Natural killer cell (primary cell): ENCODE measurements at regions of chr7 and their contacts with region 1.

Region 1: GRCh38 chr7:106112117-106112971 is at the start of gene SYPL1:
- DNase-seq: peak; percentile 85 to 96
- ATAC-seq: peak; percentile 86 to 96 (median 89)
- H3K4me3 ChIP-seq: peak within 1 kb of the TSS; percentile 56
- H3K4me3 Mint-ChIP-seq: peak within 1 kb of the TSS; percentile 94
- H3K27ac ChIP-seq: peak within 1 kb of the TSS; percentile 88
- H3K27ac Mint-ChIP-seq: peak within 1 kb of the TSS; percentile 84
- H3K4me1 ChIP-seq: peaks cover 17% of the 10 kb centered on the region
- H3K4me1 Mint-ChIP-seq: peaks cover 30 to 38% of the 10 kb centered on the region in 2 donors
- H3K27me3 ChIP-seq: no peaks in the 10 kb centered on the region
- H3K27me3 Mint-ChIP-seq: peaks cover 2 to 13% of the 10 kb centered on the region in 2 donors
- CTCF ChIP-seq: no peak
- total RNA-seq, gene SYPL1: 13.1 to 22.2 (median 14.9) TPM

Region 2: DNA sequence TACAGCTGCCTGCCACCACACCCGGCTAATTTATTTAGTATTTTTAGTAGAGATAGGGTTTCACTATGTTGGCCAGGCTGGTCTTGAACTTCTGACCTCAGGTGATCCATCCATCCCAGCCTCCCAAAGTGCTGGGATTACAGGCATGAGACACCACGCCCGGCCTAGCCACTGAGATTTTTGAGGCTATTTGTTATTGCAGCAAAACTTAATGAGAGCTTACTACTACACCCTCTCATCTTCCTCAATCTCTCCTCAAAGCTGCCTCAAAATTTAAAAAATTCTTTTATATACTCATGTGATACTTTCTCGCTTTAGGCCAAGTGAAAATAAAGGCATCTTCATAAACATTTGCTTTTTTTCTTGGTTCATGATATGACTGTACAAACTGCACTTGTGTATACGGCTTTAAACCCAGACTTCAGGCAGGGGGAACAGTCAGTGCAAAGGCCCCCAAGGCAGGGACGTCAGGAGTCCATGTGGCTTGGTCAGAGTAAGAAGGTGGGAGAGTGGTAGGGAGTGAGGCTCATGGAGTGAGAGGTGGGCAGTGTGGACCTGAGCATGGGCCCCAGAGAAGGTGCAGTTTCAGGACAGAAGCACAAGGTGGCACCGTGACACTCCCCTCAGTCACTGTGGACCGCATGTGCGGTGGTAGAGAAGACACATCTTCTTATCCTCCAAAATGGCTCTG is 55.7 kb before region 1 on chr7:
- intact Hi-C with region 1: loop called (anchors 5 kb)
- DNase-seq: peak; percentile 54 to 87
- ATAC-seq: peak; percentile 92 to 99 (median 99)
- H3K4me3 ChIP-seq: no peak overlapping the region
- H3K4me3 Mint-ChIP-seq: no peak overlapping the region
- H3K27ac ChIP-seq: no peak overlapping the region
- H3K27ac Mint-ChIP-seq: no peak overlapping the region
- H3K4me1 ChIP-seq: peaks cover 27% of the 10 kb centered on the region
- H3K4me1 Mint-ChIP-seq: peaks cover 5 to 13% of the 10 kb centered on the region in 2 donors
- H3K27me3 ChIP-seq: no peaks in the 10 kb centered on the region
- H3K27me3 Mint-ChIP-seq: peaks cover 0 to 9% of the 10 kb centered on the region in 2 donors
- CTCF ChIP-seq: peak; percentile 81

Region 3: GRCh38 chr7:106071356-106071998 is 40.9 kb before region 1 on chr7:
- intact Hi-C with region 1: loop called (anchors 2 kb)
- DNase-seq: peak in 1 of 2 donors; percentile 77
- ATAC-seq: peak; percentile 96 to 99 (median 97)
- H3K4me3 ChIP-seq: peak overlapping the region; percentile 9
- H3K4me3 Mint-ChIP-seq: peak overlapping the region; percentile 73
- H3K27ac ChIP-seq: peak overlapping the region; percentile 88
- H3K27ac Mint-ChIP-seq: peak overlapping the region; percentile 83 to 86
- H3K4me1 ChIP-seq: peaks cover 59% of the 10 kb centered on the region
- H3K4me1 Mint-ChIP-seq: peaks cover 39 to 43% of the 10 kb centered on the region in 2 donors
- H3K27me3 ChIP-seq: no peaks in the 10 kb centered on the region
- H3K27me3 Mint-ChIP-seq: peaks cover 7 to 30% of the 10 kb centered on the region in 2 donors
- CTCF ChIP-seq: no peak

Region 4: DNA sequence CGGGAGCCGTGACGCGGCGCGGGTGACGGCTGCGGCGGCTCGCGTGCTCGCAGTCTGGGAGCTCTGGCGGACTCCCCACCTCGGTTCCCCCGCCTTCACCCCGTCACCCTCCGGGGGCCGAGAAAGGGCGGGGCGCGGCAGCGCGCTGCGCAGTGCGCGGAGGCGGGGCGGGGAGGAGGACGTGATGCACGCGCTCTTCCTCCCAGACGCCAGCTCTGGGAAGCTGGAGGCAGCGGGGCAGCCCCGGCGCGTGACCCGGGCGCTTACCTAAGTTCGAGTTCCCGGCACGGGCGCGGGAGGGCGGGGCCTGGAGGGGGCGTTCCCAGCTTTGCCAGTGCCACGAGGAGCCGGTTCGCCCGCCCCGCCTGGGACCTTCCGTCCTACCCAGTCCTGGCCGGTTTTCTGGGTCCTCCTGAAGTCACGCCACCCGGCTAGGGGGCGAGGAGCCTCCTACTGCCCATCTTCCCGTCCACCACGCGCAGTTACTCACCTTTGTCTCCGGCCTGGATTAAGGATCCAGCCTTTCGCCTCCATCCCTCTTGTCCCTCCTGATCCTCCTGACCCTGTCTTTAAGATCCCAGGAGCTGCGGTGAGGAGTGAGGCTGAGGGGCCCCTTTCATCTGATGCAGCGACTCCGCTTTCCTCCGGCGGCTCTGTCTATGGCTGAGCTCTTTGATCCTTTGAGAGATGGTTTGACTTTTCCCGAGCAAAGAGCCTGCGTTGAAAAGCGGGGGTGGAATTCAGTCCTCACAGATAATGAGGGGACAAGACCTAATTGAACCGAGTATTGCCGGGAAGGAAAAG is 172.9 kb after region 1 on chr7:
- intact Hi-C with region 1: loop called (anchors 10 kb)
- DNase-seq: peak; percentile 92 to 98
- ATAC-seq: peak; percentile 88 to 96 (median 89)
- H3K4me3 ChIP-seq: peak overlapping the region; percentile 97
- H3K4me3 Mint-ChIP-seq: peak overlapping the region; percentile 95
- H3K27ac ChIP-seq: peak overlapping the region; percentile 97
- H3K27ac Mint-ChIP-seq: peak overlapping the region; percentile 93 to 95
- H3K4me1 ChIP-seq: peaks cover 12% of the 10 kb centered on the region
- H3K4me1 Mint-ChIP-seq: peaks cover 16 to 20% of the 10 kb centered on the region in 2 donors
- H3K27me3 ChIP-seq: no peaks in the 10 kb centered on the region
- H3K27me3 Mint-ChIP-seq: peaks cover under 1 to 2% of the 10 kb centered on the region in 2 donors
- CTCF ChIP-seq: no peak

Region 5: GRCh38 chr7:106692450-106693051 is 580.2 kb after region 1 on chr7:
- intact Hi-C with region 1: no loop called
- DNase-seq: no peak
- ATAC-seq: no peak
- H3K4me3 ChIP-seq: no peak overlapping the region
- H3K4me3 Mint-ChIP-seq: no peak overlapping the region
- H3K27ac ChIP-seq: no peak overlapping the region
- H3K27ac Mint-ChIP-seq: no peak overlapping the region
- H3K4me1 ChIP-seq: no peaks in the 10 kb centered on the region
- H3K4me1 Mint-ChIP-seq: peaks cover 6 to 8% of the 10 kb centered on the region in 2 donors
- H3K27me3 ChIP-seq: no peaks in the 10 kb centered on the region
- H3K27me3 Mint-ChIP-seq: peaks cover 6 to 16% of the 10 kb centered on the region in 2 donors
- CTCF ChIP-seq: no peak